ENCODE measurements at regions of chr2 and their contacts with region 1.

Region 1: DNA sequence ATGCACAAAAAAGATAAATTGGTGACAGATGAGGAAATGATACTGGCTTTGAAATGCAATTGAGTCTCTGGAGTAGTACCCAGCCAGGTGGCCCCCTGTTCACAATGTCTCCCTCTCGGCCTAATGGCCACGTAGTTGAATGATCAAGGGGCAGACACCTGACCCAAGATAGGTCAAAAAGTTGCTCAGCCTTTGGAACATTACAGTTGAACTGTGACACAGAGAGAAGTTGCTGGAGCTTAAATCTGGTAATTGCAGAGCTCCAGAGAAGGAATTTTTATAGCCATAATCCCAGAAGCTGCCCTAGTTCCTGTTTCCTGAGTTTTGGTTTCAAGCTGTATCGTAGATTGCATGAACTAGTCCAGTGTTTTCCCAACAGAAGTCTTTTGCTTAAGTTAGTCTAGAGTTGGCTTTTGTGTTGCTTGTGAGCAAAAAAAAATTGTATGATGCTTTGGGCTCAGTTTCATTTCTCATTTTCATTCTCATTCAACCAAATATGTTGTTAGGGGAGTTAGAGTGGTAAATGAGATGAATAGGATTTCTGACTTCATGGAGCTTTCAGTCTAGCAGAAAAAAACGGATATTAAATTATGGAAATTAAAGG is 117.9 kb downstream of the CSRNP3 start:
- DNase-seq: peak; percentile 32
- ATAC-seq: peak; percentile 90
- H3K4me3 ChIP-seq: 0 out of 2 replicates have a peak overlapping the region, but pooled peaks have one; percentile 19
- H3K27ac ChIP-seq: no peak overlapping the region; the same call in 1 of the 2 replicates
- H3K4me1 ChIP-seq: peaks cover 5% of the 10 kb centered on the region; the same call in 1 of the 2 replicates
- H3K27me3 ChIP-seq: no peaks in the 10 kb centered on the region
- CTCF ChIP-seq: no peak
- EP300 ChIP-seq: no peak
- POLR2A ChIP-seq: no peak
- RAD21 ChIP-seq: no peak

Region 2: GRCh38 chr2:165513479-165513878 is 74.0 kb before region 1 on chr2:
- CTCF ChIA-PET with region 1: no interaction called
- POLR2A ChIA-PET with region 1: no interaction called
- RAD21 ChIA-PET with region 1: no interaction called
- SMC1A ChIA-PET with region 1: no interaction called
- in situ Hi-C with region 1: no loop called
- intact Hi-C with region 1: no loop called
- DNase-seq: no peak
- ATAC-seq: no peak
- H3K4me3 ChIP-seq: no peak overlapping the region
- H3K27ac ChIP-seq: no peak overlapping the region
- H3K4me1 ChIP-seq: no peaks in the 10 kb centered on the region
- H3K27me3 ChIP-seq: no peaks in the 10 kb centered on the region
- CTCF ChIP-seq: no peak
- EP300 ChIP-seq: no peak
- POLR2A ChIP-seq: no peak
- RAD21 ChIP-seq: no peak

Region 3: GRCh38 chr2:165681841-165682240 is 94.4 kb after region 1 on chr2:
- CTCF ChIA-PET with region 1: no interaction called
- POLR2A ChIA-PET with region 1: no interaction called
- RAD21 ChIA-PET with region 1: no interaction called
- SMC1A ChIA-PET with region 1: interaction called, 11 read pairs
- in situ Hi-C with region 1: no loop called
- intact Hi-C with region 1: no loop called
- DNase-seq: no peak
- ATAC-seq: no peak
- H3K4me3 ChIP-seq: no peak overlapping the region
- H3K27ac ChIP-seq: no peak overlapping the region
- H3K4me1 ChIP-seq: no peaks in the 10 kb centered on the region
- H3K27me3 ChIP-seq: no peaks in the 10 kb centered on the region
- CTCF ChIP-seq: no peak
- EP300 ChIP-seq: no peak
- POLR2A ChIP-seq: no peak
- RAD21 ChIP-seq: no peak

Measured in GM12878 (cell line).